Activated CD4-positive, alpha-beta memory T cell treated with anti-CD3 and anti-CD28 coated beads for 36 hours (primary cell): ENCODE measurements at regions of chr7 and their contacts with region 1.

Region 1: GRCh38 chr7:139767561-139767982 is 10.2 kb downstream of the HIPK2 start:
- DNase-seq: no peak
- H3K4me3 Mint-ChIP-seq: no peak overlapping the region
- H3K27ac Mint-ChIP-seq: peak overlapping the region; percentile 70
- H3K4me1 Mint-ChIP-seq: peaks cover 64% of the 10 kb centered on the region
- H3K27me3 Mint-ChIP-seq: no peaks in the 10 kb centered on the region

Region 2: DNA sequence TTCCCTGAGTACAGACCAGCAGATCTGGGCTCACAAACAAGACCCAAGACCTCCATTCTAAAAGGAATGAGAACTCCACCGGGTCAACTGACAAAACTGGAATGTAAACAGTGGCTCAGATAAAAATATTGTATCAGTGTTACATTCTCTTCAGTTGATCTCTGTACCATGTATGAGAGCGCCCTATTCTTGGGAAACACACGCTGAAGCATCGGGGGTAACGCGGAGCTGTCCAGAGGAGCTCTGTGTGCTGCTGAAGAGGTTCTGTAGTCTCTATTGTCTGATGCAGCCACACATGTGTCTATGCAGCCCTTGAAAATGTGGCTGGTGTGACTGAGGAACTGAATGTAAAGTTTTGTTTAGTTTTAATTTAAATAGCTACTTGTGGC is 29.5 kb before region 1 on chr7:
- CTCF ChIA-PET with region 1: no interaction called
- POLR2A ChIA-PET with region 1: no interaction called
- intact Hi-C with region 1: loop called (anchors 5 kb)
- DNase-seq: no peak
- H3K4me3 Mint-ChIP-seq: no peak overlapping the region
- H3K27ac Mint-ChIP-seq: peak overlapping the region; percentile 68
- H3K4me1 Mint-ChIP-seq: peaks cover 34% of the 10 kb centered on the region
- H3K27me3 Mint-ChIP-seq: no peaks in the 10 kb centered on the region